Dendritic cell treated with granulocyte-macrophage colony-stimulating factor and Interleukin-4, amounts not matched to agents 40 ng/mL and 50 ng/mL, for 4 days (primary cell): ENCODE measurements at regions of chr17 and their contacts with region 1.

Region 1: GRCh38 chr17:50949989-50950881 is 84.1 kb upstream of the TOB1 start:
- H3K4me3 Mint-ChIP-seq: no peak overlapping the region
- H3K27ac Mint-ChIP-seq: peak overlapping the region; percentile 87
- H3K4me1 Mint-ChIP-seq: peaks cover 81% of the 10 kb centered on the region
- H3K27me3 Mint-ChIP-seq: peaks cover 9% of the 10 kb centered on the region

Region 2: DNA sequence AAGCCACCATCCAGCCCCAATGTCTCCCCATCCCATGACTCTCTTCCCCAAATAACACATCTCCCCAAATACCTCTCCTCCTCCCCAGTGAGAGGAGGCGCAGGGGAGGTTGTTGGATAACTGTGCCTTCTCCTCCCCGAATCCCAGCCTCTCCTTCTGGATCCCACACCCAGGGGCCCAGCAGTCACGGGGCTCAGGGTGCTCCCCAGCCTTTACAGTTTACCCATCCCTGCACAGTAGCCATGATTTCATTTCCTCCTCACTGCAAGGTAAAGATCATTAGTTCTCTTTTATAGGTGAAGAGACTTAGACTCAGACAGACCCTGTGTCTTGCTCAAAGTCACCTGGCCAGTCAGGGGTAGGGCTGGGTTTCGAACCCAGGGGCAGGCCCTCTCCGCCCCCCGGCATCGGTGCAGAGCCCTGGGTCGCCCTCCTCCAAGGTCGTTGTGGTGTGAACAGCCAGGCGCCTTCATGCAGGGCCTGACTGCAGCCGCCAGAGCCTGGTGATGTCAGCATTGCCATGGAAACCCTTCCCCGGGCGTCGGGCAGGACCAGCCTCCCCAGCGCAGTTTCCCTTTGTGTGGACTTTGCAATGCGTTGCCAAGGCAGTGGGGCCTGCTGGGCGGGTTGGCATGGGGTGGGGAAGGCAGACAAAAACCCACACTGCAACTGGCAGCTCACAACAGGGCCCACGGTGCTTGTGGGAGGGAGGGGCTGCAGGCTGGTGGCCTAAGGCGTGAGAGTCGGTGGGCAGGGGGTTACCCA is 30.7 kb before region 1 on chr17:
- intact Hi-C with region 1: loop called (anchors 2 kb)
- H3K4me3 Mint-ChIP-seq: peak overlapping the region; percentile 21
- H3K27ac Mint-ChIP-seq: peak overlapping the region; percentile 77
- H3K4me1 Mint-ChIP-seq: peaks cover 54% of the 10 kb centered on the region
- H3K27me3 Mint-ChIP-seq: peaks cover 7% of the 10 kb centered on the region